CD8-positive, alpha-beta memory T cell (primary cell): ENCODE measurements at regions of chr15 and their contacts with region 1.

Region 1: GRCh38 chr15:72599855-72600464 is 54.5 kb upstream of the GOLGA6B start:
- DNase-seq: peak in 2 of 5 donors; percentile 14 to 15
- H3K4me3 ChIP-seq: no peak overlapping the region
- H3K4me3 Mint-ChIP-seq: no peak overlapping the region
- H3K27ac ChIP-seq: no peak overlapping the region
- H3K27ac Mint-ChIP-seq: no peak overlapping the region
- H3K4me1 ChIP-seq: no peaks in the 10 kb centered on the region
- H3K4me1 Mint-ChIP-seq: no peaks in the 10 kb centered on the region
- H3K27me3 ChIP-seq: no peaks in the 10 kb centered on the region
- H3K27me3 Mint-ChIP-seq: peaks cover 0 to 1% of the 10 kb centered on the region in 2 donors

Region 2: GRCh38 chr15:72585476-72586082 is 14.4 kb before region 1 on chr15:
- CTCF ChIA-PET with region 1: interaction called, 17 read pairs
- POLR2A ChIA-PET with region 1: no interaction called
- DNase-seq: no peak
- H3K4me3 ChIP-seq: no peak overlapping the region
- H3K4me3 Mint-ChIP-seq: no peak overlapping the region
- H3K27ac ChIP-seq: no peak overlapping the region
- H3K27ac Mint-ChIP-seq: no peak overlapping the region
- H3K4me1 ChIP-seq: no peaks in the 10 kb centered on the region
- H3K4me1 Mint-ChIP-seq: peaks cover 0 to 9% (median 2%) of the 10 kb centered on the region in 3 donors
- H3K27me3 ChIP-seq: no peaks in the 10 kb centered on the region
- H3K27me3 Mint-ChIP-seq: no peaks in the 10 kb centered on the region

Region 3: DNA sequence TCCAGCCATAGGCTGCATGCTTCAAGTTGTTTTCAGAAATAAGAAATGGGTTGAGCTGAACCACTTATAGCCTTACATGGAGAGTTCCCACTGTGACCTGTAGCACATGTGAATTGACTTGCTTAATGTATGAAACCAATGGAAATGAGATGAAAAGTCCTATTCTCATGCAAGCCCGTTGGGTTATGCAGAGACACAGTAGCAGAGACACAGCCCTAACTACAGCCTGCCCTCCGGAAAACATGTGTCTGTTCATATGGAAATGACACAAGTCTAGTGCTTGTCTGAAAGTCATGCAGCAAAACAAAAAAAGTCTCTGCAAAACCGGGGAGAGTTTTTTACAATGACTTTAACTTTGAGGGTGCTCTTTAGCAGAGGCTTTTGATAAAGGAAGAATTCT is 71.6 kb after region 1 on chr15:
- CTCF ChIA-PET with region 1: interaction called, 19 read pairs
- POLR2A ChIA-PET with region 1: no interaction called
- DNase-seq: no peak
- H3K4me3 ChIP-seq: no peak overlapping the region
- H3K4me3 Mint-ChIP-seq: peak overlapping the region in 1 of 7 donors; percentile 18
- H3K27ac ChIP-seq: no peak overlapping the region
- H3K27ac Mint-ChIP-seq: no peak overlapping the region
- H3K4me1 ChIP-seq: no peaks in the 10 kb centered on the region
- H3K4me1 Mint-ChIP-seq: peaks cover 3 to 7% (median 6%) of the 10 kb centered on the region in 3 donors
- H3K27me3 ChIP-seq: no peaks in the 10 kb centered on the region
- H3K27me3 Mint-ChIP-seq: peaks cover 0 to 23% of the 10 kb centered on the region in 2 donors